ENCODE measurements at regions of chr1 and their contacts with region 1.

Region 1: GRCh38 chr1:84724128-84724860 is 34.0 kb upstream of the SSX2IP start:
- H3K4me3 Mint-ChIP-seq: no peak overlapping the region
- H3K27ac Mint-ChIP-seq: no peak overlapping the region
- H3K4me1 Mint-ChIP-seq: no peaks in the 10 kb centered on the region
- H3K27me3 Mint-ChIP-seq: peaks cover 1% of the 10 kb centered on the region

Region 2: DNA sequence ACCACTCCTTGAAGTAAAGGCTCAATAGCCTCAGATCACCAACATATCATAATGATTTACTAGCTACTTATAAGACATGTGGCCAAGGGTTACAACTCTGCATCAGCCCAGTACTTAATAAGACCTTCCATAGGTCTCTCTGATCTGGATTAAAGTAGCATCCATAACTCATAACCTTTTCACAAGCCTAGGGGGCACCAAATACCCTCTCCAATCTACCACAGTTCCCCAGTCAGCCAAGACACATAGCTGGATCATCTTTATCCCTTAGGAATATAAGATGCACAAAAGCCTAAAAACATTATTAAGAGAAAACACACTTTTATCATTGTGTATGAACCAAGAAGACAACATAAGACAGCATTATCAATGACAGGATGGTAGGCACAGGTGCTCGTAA is 56.1 kb before region 1 on chr1:
- intact Hi-C with region 1: loop called (anchors 5 kb)
- H3K4me3 Mint-ChIP-seq: no peak overlapping the region
- H3K27ac Mint-ChIP-seq: no peak overlapping the region
- H3K4me1 Mint-ChIP-seq: no peaks in the 10 kb centered on the region
- H3K27me3 Mint-ChIP-seq: no peaks in the 10 kb centered on the region

Measured in dendritic cell treated with granulocyte-macrophage colony-stimulating factor and Interleukin-4, amounts not matched to agents 40 ng/mL and 50 ng/mL, for 4 days (primary cell).